ENCODE measurements at regions of chr13 and their contacts with region 1.

Region 1: DNA sequence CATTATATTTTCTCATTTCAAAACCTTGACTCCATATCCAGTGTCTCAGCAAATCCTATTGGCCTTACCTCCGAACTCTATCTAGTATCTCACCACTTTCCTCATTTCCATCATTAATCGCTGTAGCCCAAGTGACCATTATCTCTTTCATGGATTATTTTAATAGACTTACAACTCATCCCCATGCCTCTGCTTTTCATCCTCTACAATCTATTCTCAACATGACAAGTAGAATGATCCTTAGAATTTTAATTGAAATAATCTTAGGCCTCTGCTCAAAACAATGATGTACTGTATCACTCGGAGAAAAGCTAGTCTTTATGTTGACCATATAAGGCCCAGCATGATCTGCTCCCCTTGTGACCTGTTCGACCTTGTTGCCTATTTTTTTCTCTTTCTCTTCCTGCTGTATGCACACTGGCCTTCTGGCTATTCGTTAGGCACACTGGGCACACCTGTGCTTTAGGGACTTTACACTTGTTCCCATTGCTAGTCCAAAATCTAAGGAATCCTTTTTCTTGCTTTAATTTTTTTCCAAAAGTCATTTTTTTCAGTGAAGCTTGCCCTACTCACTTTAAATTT is 21.4 kb downstream of the DNAJC15 start:
- DNase-seq: peak; percentile 23
- H3K4me3 Mint-ChIP-seq: peak overlapping the region; percentile 32
- H3K27ac Mint-ChIP-seq: peak overlapping the region; percentile 96
- H3K4me1 Mint-ChIP-seq: peaks cover 64% of the 10 kb centered on the region
- H3K27me3 Mint-ChIP-seq: no peaks in the 10 kb centered on the region
- CTCF ChIP-seq: no peak

Region 2: DNA sequence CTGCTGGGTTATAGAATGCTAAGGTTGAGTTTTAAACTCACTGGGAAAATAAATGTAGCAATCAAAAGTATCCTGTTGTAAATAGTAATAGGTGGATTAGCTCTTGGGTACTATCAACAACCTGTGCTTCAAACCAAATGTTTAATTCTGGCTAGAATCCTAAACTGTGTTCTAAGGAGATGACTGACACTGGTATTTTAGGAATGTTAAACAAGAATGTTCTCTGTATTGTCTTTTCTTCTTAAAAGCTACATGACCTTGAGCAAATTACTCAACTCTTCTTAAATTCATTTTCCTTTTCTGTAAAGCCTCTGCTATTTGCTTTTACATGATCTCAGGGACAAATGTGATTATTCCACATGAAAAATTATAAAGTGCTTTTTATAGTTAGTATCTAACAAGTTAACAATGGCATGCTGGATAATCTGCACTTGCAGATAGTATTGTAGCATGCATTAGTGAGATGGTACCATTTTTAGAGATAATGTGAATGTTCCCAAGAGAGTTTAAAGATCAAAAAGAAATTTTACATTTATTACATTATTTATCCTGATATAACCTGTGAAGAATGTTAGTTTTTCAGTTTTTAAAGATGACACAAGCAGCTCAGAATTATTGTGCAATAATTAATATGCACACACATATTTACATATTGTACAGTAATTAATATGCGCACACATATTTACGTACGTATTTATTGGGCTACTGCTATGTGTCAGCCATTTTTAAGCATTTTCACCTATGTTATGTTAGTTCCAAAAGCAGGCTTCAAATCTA is 39.2 kb before region 1 on chr13:
- CTCF ChIA-PET with region 1: no interaction called
- POLR2A ChIA-PET with region 1: interaction called, 10 read pairs
- intact Hi-C with region 1: no loop called
- DNase-seq: peak; percentile 52
- H3K4me3 Mint-ChIP-seq: peak overlapping the region; percentile 36
- H3K27ac Mint-ChIP-seq: peak overlapping the region; percentile 88
- H3K4me1 Mint-ChIP-seq: peaks cover 43% of the 10 kb centered on the region
- H3K27me3 Mint-ChIP-seq: no peaks in the 10 kb centered on the region
- CTCF ChIP-seq: no peak

Region 3: GRCh38 chr13:43054803-43055802 is 10.3 kb after region 1 on chr13:
- CTCF ChIA-PET with region 1: no interaction called
- POLR2A ChIA-PET with region 1: interaction called, 12 read pairs
- intact Hi-C with region 1: no loop called
- DNase-seq: peak; percentile 45
- H3K4me3 Mint-ChIP-seq: no peak overlapping the region
- H3K27ac Mint-ChIP-seq: no peak overlapping the region
- H3K4me1 Mint-ChIP-seq: peaks cover 34% of the 10 kb centered on the region
- H3K27me3 Mint-ChIP-seq: no peaks in the 10 kb centered on the region
- CTCF ChIP-seq: no peak